ENCODE measurements at regions of chr2 and their contacts with region 1.

Region 1: GRCh38 chr2:72745679-72746368 is 80.0 kb downstream of the EXOC6B start:
- DNase-seq: no peak
- H3K4me3 ChIP-seq: no peak overlapping the region
- H3K27ac ChIP-seq: peak overlapping the region in 2 of 59 donors; percentile 11 to 12
- H3K27me3 ChIP-seq: no peaks in the 10 kb centered on the region
- CTCF ChIP-seq: peak; percentile 58 to 94 (median 78)

Region 2: DNA sequence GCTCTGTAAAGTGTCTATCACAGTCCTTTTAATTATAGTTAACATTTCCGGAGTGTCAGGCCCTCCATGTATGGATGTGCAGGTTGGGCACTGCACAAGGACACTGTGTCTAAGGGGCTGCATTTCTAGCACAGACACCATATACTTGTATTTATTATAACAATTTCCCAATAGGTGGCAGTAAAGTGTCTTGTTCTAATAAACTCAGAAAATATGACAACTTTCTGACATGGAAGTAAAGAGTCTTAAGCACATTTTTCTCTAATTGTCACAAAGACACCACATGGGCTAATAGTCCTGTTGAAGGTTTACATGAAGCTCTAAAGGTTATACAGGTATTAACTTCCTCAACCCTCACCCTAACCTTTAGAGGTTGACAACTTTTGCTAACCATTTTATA is 1135.9 kb before region 1 on chr2:
- intact Hi-C with region 1: loop called in 1 of 2 experiments (anchors 10 kb)
- DNase-seq: peak in 2 of 10 donors; percentile 7 to 14
- H3K4me3 ChIP-seq: no peak overlapping the region
- H3K27ac ChIP-seq: peak overlapping the region in 10 of 59 donors; percentile 3 to 58 (median 20)
- H3K27me3 ChIP-seq: no peaks in the 10 kb centered on the region
- CTCF ChIP-seq: peak in 54 of 56 donors; percentile 23 to 69 (median 46)

Region 3: DNA sequence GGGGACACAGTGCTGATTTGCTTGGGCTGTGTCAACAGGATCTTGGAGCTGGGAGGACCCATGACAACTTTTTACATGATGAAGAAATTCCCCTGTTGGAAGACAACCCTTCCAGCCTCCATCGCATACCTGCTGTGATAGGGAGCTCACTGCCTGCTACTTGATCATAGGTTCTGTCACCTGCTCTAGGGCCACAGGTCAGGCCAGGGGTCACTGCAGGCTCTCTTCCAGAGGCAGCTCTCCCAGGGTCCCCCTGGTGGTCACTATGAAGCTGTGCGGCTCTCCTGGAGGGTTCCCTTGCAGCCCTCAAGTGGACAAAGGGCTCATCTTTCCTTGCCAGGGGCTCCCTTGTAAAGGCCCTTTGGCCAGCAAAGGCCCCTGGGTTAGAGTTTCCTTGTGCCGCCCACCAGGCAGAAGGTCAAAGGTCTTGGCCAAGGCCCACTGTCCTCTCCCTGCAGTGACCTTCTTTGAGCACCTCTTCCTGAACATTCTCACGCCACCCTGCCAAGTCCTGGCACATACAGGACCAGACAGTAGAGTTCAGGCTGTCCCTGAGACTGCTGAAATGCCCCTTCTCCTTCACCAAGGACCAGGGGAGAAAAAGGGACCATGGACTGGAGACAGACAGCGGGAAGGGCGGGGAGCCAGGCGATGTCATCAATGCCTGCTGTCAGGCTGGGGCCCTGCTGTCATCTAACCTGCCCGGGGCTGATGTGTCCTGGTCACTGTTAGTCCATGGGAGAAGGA is 947.4 kb before region 1 on chr2:
- intact Hi-C with region 1: loop called in 1 of 2 experiments (anchors 10 kb)
- DNase-seq: no peak
- H3K4me3 ChIP-seq: no peak overlapping the region
- H3K27ac ChIP-seq: no peak overlapping the region
- H3K27me3 ChIP-seq: peaks cover 0 to 5% (median 0%) of the 10 kb centered on the region in 45 donors
- CTCF ChIP-seq: peak in 55 of 56 donors; percentile 23 to 78 (median 66)

Region 4: GRCh38 chr2:71923887-71924533 is 821.8 kb before region 1 on chr2:
- intact Hi-C with region 1: loop called in 1 of 2 experiments (anchors 5 kb)
- DNase-seq: peak in 7 of 10 donors; percentile 40 to 75 (median 69)
- H3K4me3 ChIP-seq: no peak overlapping the region
- H3K27ac ChIP-seq: no peak overlapping the region
- H3K27me3 ChIP-seq: no peaks in the 10 kb centered on the region
- CTCF ChIP-seq: peak; percentile 73 to 95 (median 89)

Region 5: GRCh38 chr2:72012886-72013574 is 732.8 kb before region 1 on chr2:
- intact Hi-C with region 1: no loop called
- DNase-seq: peak in 2 of 10 donors; percentile 29 to 89
- H3K4me3 ChIP-seq: no peak overlapping the region
- H3K27ac ChIP-seq: peak overlapping the region in 1 of 59 donors; percentile 12
- H3K27me3 ChIP-seq: peaks cover 0 to 12% (median 0%) of the 10 kb centered on the region in 45 donors
- CTCF ChIP-seq: no peak

Region 6: DNA sequence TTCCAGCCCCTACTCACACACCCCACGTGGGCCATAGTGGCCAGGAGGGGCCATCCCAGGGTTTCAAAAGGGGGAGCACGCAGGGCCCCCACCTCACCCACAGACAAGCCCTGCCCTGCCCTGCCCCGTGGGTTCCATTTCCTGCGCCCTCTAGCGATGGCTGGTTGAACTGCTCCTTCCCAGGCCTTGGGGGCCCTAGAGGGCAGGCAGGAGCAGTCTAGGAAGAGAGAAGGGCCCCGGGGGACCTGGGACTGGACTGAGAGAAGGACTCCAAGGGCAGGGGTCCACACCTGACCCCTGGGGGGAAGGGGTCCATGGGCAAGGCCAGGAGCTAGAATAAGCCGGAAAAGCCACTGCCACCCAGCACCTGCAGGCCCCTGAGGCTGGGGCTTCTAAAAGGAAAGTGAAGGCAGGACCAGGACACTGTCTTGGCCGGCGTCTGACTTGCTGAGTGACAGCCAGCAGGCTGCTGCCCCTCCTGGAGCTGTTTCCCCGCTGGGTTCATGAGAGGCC is 608.3 kb before region 1 on chr2:
- intact Hi-C with region 1: loop called (anchors 10 kb)
- DNase-seq: peak; percentile 38 to 79 (median 63)
- H3K4me3 ChIP-seq: peak overlapping the region in 2 of 59 donors; percentile 7
- H3K27ac ChIP-seq: peak overlapping the region in 1 of 59 donors; percentile 33
- H3K27me3 ChIP-seq: no peaks in the 10 kb centered on the region
- CTCF ChIP-seq: peak; percentile 38 to 95 (median 86)

Region 7: DNA sequence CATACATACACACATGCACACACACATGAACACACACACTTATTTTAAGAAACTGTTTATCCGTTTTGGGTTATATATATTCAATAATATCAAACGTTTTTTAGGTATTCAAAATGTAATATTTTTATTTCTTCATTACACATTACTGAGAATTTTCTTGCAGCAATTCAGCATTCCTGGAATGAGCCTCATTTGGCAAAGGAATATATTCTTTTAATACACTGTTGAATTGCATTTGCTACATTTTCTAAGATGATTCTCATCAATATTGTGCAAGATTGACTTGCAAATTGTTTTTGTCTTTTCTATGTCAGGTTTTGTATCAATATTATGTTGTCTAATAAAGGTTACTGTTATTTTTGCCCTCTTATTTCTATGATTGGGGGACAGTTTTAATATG is 322.1 kb before region 1 on chr2:
- intact Hi-C with region 1: no loop called
- DNase-seq: no peak
- H3K4me3 ChIP-seq: no peak overlapping the region
- H3K27ac ChIP-seq: no peak overlapping the region
- H3K27me3 ChIP-seq: no peaks in the 10 kb centered on the region
- CTCF ChIP-seq: no peak

Region 8: DNA sequence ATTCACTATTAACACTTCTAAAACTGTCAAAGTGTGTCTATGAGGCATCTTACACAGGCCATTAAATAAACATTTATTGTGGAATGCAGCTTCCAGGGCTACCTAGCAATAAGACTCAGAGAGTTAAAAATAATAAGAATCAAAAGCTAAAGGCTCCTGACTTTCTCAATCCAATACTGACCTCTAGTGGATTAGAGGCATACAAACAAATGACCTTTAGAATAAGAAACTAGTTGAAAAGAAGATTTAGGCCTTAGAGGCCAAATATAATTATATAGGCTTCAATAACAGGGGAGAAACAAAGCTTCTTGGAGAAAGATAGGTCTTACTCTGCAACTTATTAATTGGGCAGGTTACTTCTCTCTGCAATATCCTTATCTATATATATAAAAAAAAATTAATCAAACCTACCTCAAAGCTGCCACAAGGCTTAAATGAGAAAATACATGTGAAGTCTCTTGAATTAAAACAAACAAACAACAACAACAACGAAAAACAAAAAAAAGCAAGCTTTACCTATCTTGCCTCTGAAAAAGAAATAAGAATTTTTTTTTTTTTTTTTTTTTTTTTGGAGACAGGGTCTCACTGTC is 166.1 kb before region 1 on chr2:
- intact Hi-C with region 1: loop called in 1 of 2 experiments (anchors 10 kb)
- DNase-seq: no peak
- H3K4me3 ChIP-seq: no peak overlapping the region
- H3K27ac ChIP-seq: no peak overlapping the region
- H3K27me3 ChIP-seq: no peaks in the 10 kb centered on the region
- CTCF ChIP-seq: peak; percentile 56 to 90 (median 75)

Region 9: DNA sequence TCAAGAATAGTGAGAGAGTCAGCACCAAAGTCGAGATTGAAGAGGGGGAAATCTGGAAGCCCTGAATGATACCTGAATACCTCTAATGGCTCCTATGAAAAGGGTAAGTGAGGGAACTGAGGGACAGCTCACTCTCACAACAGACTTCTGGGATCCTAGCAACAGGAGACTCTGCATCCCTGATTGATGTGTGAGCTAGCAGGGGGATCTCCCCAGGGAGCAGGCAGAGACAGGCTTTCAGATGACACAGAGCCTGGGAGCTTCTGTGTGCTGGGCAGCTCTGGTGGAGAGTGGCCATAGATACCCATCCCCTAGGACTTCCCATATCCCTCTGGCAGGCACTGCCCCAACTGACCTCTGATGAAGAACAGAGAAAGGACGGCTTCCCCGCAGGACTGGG is 126.2 kb before region 1 on chr2:
- intact Hi-C with region 1: loop called in 1 of 2 experiments (anchors 10 kb)
- DNase-seq: no peak
- H3K4me3 ChIP-seq: no peak overlapping the region
- H3K27ac ChIP-seq: no peak overlapping the region
- H3K27me3 ChIP-seq: no peaks in the 10 kb centered on the region
- CTCF ChIP-seq: no peak

Region 10: DNA sequence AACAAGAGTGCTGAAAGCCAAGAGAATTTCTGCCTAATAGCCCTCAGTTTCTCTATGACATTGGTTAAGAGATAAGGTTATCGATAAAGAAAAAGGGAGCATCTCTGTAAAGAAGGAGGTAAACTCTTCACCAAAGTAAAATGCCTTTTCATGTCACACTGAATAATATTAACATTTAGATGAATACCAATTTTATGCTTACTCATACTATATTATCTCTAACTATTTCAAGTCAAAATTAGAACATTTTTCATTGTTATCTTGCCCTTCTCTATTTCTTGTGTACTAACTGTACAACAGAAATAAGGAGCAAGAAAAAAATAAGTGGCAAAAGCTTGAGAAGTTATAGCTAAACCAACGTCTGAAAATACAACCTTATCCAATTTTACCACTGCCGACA is 47.5 kb before region 1 on chr2:
- intact Hi-C with region 1: no loop called
- DNase-seq: no peak
- H3K4me3 ChIP-seq: no peak overlapping the region
- H3K27ac ChIP-seq: no peak overlapping the region
- H3K27me3 ChIP-seq: no peaks in the 10 kb centered on the region
- CTCF ChIP-seq: no peak

Region 11: GRCh38 chr2:72770879-72771461 is 25.1 kb after region 1 on chr2:
- intact Hi-C with region 1: no loop called
- DNase-seq: peak in 3 of 10 donors; percentile 26 to 79 (median 73)
- H3K4me3 ChIP-seq: no peak overlapping the region
- H3K27ac ChIP-seq: peak overlapping the region in 47 of 59 donors; percentile 8 to 85 (median 59)
- H3K27me3 ChIP-seq: no peaks in the 10 kb centered on the region
- CTCF ChIP-seq: peak; percentile 87 to 100 (median 97)